Dorsolateral prefrontal cortex (tissue), 120 donors: ENCODE measurements at regions of chr12 and their contacts with region 1.

Region 1: DNA sequence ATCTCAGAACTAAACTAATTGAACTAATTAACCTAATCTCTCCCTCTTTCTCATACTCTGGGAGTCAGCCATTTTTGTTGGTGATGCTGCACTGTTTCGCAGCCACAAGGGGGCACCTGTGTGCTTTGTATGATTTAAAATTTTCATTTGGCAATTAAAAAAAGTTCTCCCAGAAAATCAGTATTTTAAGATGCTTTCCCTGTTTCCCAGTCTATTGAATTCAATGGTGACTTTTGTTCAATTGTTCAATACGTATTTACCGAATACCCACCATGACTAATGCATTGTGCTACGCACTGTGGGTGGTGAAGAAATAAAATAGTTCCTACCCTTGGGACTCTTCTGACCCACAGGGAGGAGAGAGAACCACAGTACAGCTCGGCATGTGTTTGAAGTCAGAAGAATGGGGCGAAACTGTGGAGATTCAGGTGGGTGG is 63.7 kb downstream of the ZNF664 start:
- DNase-seq: peak in 6 of 10 donors; percentile 35 to 62 (median 49)
- H3K4me3 ChIP-seq: peak overlapping the region in 1 of 59 donors; percentile 7
- H3K27ac ChIP-seq: peak overlapping the region in 5 of 59 donors; percentile 5 to 47 (median 26)
- H3K27me3 ChIP-seq: no peaks in the 10 kb centered on the region
- CTCF ChIP-seq: peak; percentile 91 to 99 (median 97)

Region 2: DNA sequence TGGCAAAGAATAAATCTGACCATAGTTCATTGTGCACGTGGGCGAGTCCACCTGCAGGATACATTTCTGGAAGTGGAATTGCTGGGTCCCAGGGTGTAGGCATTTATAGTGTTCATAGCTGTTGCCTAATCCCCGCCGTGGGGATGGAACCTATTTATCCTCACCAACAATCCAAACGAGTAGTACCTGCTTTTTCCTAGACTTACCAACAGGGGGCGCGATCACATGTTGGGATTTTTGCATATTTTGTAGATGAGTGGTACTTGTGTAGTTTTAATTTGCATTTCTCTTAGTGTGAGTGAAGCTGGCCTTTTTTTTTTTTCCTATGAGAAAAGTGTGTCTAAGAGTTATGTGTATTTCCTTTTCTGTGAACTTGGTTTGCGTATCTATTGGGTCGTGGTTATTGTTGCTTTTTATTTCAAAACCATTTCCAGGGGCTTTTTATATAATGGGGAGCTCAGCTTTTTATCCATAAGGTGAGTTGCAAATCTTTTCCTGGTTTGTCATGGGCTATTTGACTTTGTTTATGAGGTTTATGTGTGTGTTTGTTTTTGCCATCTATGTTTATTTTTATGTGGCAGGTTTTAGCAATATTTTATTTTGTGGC is 131.3 kb before region 1 on chr12:
- intact Hi-C with region 1: loop called in 1 of 2 experiments (anchors 1 kb)
- DNase-seq: peak in 6 of 10 donors; percentile 33 to 71 (median 53)
- H3K4me3 ChIP-seq: no peak overlapping the region
- H3K27ac ChIP-seq: no peak overlapping the region
- H3K27me3 ChIP-seq: no peaks in the 10 kb centered on the region
- CTCF ChIP-seq: peak; percentile 70 to 91 (median 85)

Region 3: DNA sequence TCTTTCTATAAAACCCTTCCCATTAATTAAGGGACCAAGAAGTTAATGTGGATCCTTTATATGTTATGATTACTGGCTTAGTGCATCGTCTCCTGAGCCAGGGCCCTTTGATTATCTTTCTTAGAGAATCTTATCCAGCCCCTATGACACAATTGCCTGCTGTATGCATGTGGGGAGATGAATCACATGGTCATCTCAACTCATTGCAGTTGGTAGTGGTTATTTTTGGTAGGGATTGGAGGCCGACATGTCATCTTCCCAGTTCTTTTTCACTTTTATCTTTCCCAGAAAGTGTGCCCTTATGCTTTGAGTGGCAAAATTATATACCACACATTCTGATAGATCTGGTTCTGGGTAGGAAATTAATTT is 37.7 kb before region 1 on chr12:
- intact Hi-C with region 1: loop called in 1 of 2 experiments (anchors 1 kb)
- DNase-seq: no peak
- H3K4me3 ChIP-seq: no peak overlapping the region
- H3K27ac ChIP-seq: peak overlapping the region in 43 of 59 donors; percentile 3 to 93 (median 82)
- H3K27me3 ChIP-seq: no peaks in the 10 kb centered on the region
- CTCF ChIP-seq: no peak

Region 4: GRCh38 chr12:124321040-124321481 is 284.4 kb after region 1 on chr12:
- intact Hi-C with region 1: loop called (anchors 5 kb)
- DNase-seq: peak; percentile 64 to 86 (median 74)
- H3K4me3 ChIP-seq: no peak overlapping the region
- H3K27ac ChIP-seq: peak overlapping the region in 9 of 59 donors; percentile 4 to 66 (median 29)
- H3K27me3 ChIP-seq: no peaks in the 10 kb centered on the region
- CTCF ChIP-seq: peak; percentile 75 to 99 (median 98)

Region 5: DNA sequence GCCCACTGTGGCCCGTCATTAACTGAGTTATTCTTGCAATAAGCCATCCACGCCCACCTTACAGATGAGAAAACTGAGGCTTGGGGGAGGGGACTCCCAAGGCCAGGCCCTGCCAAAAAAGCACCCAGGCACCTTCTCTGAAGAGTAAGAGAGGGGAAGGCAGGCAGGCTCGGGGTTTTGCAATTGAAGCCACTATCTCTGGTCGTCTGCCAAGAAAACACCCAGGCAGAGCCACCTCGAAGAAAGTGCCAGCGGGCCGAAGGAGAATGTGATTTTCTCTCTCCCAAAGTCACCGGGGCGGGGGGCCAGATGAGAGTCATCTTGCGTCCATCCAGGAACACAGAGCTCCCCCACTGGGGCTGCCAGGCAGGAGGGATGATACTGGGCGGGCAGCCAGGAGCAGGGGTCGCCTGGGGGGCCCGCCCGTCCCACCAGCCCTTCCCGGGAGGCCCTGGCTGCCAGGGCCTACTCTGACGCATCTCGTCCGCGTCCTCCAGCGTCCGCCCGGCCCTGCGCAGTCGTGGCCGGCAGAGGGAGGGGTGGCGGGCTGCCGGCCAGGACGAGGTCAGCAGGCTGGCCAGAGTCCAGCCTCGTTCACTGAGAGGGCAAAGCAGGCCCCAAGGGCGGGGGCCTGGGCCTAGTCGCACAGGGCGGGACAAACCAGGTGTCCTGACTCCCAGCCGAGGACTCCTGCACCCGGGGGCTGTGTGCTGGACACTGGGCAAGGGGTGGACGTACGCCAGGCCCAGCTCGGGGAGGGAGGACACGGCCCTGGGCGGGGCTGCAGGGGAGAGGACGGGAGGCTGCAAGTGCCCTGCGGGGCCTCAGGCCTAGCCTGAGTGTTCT is 332.6 kb after region 1 on chr12:
- intact Hi-C with region 1: loop called in 1 of 2 experiments (anchors 5 kb)
- DNase-seq: peak; percentile 64 to 85 (median 79)
- H3K4me3 ChIP-seq: peak overlapping the region in 23 of 59 donors; percentile 2 to 41 (median 17)
- H3K27ac ChIP-seq: peak overlapping the region; percentile 67 to 97 (median 93)
- H3K27me3 ChIP-seq: no peaks in the 10 kb centered on the region
- CTCF ChIP-seq: peak in 42 of 56 donors; percentile 9 to 58 (median 36)

Region 6: GRCh38 chr12:124422570-124423523 is 386.2 kb after region 1 on chr12:
- intact Hi-C with region 1: no loop called
- DNase-seq: peak; percentile 64 to 95 (median 77)
- H3K4me3 ChIP-seq: peak overlapping the region in 21 of 59 donors; percentile 0 to 40 (median 19)
- H3K27ac ChIP-seq: peak overlapping the region; percentile 10 to 92 (median 84)
- H3K27me3 ChIP-seq: no peaks in the 10 kb centered on the region
- CTCF ChIP-seq: peak in 6 of 56 donors; percentile 2 to 18 (median 8)